Cardiac septum (tissue), 1 donor: ENCODE measurements at regions of chr19 and their contacts with region 1.

Region 1: GRCh38 chr19:53103198-53103944 is at the start of gene ZNF160:
- DNase-seq: peak; percentile 99
- total RNA-seq, gene ZNF160: 16.8 TPM

Region 2: GRCh38 chr19:52898081-52898480 is 205.3 kb before region 1 on chr19:
- intact Hi-C with region 1: no loop called
- DNase-seq: no peak

Region 3: DNA sequence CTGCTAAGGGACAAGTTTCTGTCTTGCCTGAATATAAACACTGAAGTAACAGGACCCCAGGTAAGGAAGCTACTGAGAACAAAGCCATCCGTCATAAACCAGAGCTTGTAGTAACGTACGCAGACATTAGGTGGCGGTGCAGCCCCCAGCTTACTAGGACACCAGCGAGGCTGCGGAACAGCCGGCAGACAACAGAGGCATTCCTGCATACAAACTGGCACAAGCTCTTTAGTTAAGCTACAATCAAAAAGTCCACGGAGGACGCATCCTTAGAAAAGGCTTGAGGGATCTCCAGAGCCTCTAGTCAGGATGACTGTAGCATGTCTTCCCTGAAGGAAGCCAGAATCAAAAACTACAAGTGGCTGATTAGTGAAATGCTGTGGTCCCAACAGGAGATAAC is 26.4 kb before region 1 on chr19:
- intact Hi-C with region 1: loop called (anchors 2 kb)
- DNase-seq: no peak

Region 4: GRCh38 chr19:53132141-53132991 is 29.0 kb after region 1 on chr19 and contains the start of gene ZNF415:
- intact Hi-C with region 1: loop called (anchors 2 kb)
- DNase-seq: peak; percentile 93
- total RNA-seq, gene ZNF415: 20.9 TPM

Region 5: GRCh38 chr19:53158119-53158656 is 54.8 kb after region 1 on chr19:
- intact Hi-C with region 1: loop called (anchors 5 kb)
- DNase-seq: no peak